ENCODE measurements at regions of chr7 and their contacts with region 1.

Region 1: DNA sequence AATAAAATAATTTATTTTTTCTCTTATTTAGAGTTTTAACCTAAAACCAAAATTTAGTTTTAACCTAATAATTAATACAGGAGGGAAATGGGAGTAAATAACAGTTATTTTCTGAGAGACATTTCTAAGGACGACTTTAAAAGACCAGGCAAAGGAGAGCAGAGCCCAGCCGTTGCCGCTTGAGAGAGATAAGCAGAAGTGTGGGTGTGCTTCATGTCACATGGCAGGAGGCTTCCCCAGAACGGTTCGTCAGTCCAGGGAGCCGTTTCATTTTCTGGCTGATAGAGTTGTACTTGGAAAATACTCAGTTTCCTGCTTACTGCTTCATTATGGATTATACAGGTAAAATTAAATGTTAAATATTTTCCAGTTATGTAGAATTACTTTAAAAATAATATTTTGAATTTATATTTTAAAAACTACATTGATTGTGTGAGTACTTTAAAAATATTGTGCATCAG is 61.4 kb downstream of the ST7 start:
- DNase-seq: no peak
- ATAC-seq: no peak
- H3K4me3 Mint-ChIP-seq: no peak overlapping the region
- H3K27ac Mint-ChIP-seq: no peak overlapping the region
- H3K4me1 Mint-ChIP-seq: peaks cover 50% of the 10 kb centered on the region
- H3K27me3 Mint-ChIP-seq: peaks cover 3% of the 10 kb centered on the region
- CTCF ChIP-seq: no peak

Region 2: GRCh38 chr7:116862234-116862950 is 152.3 kb before region 1 on chr7 and contains the start of gene CAPZA2:
- CTCF ChIA-PET with region 1: no interaction called
- POLR2A ChIA-PET with region 1: interaction called, 10 read pairs
- intact Hi-C with region 1: loop called (anchors 1 kb)
- DNase-seq: peak; percentile 98
- ATAC-seq: peak; percentile 87
- H3K4me3 Mint-ChIP-seq: peak within 1 kb of the TSS; percentile 98
- H3K27ac Mint-ChIP-seq: peak within 1 kb of the TSS; percentile 93
- H3K4me1 Mint-ChIP-seq: peaks cover 39% of the 10 kb centered on the region
- H3K27me3 Mint-ChIP-seq: peaks cover 5% of the 10 kb centered on the region
- CTCF ChIP-seq: no peak
- total RNA-seq, gene CAPZA2: 101 and 110 TPM in 2 replicates

Region 3: GRCh38 chr7:116953727-116954442 is 60.8 kb before region 1 on chr7:
- CTCF ChIA-PET with region 1: no interaction called
- POLR2A ChIA-PET with region 1: interaction called, 16 read pairs
- intact Hi-C with region 1: loop called (anchors 1 kb)
- DNase-seq: peak; percentile 60
- ATAC-seq: peak; percentile 59
- H3K4me3 Mint-ChIP-seq: peak overlapping the region; percentile 93
- H3K27ac Mint-ChIP-seq: peak overlapping the region; percentile 86
- H3K4me1 Mint-ChIP-seq: peaks cover 27% of the 10 kb centered on the region
- H3K27me3 Mint-ChIP-seq: no peaks in the 10 kb centered on the region
- CTCF ChIP-seq: no peak

Region 4: GRCh38 chr7:117001283-117001682 is 13.4 kb before region 1 on chr7:
- CTCF ChIA-PET with region 1: no interaction called
- POLR2A ChIA-PET with region 1: interaction called, 4 read pairs
- intact Hi-C with region 1: loop called (anchors 1 kb)
- DNase-seq: no peak
- ATAC-seq: no peak
- H3K4me3 Mint-ChIP-seq: no peak overlapping the region
- H3K27ac Mint-ChIP-seq: no peak overlapping the region
- H3K4me1 Mint-ChIP-seq: no peaks in the 10 kb centered on the region
- H3K27me3 Mint-ChIP-seq: no peaks in the 10 kb centered on the region
- CTCF ChIP-seq: no peak

Region 5: GRCh38 chr7:118657391-118658005 is 1642.8 kb after region 1 on chr7:
- CTCF ChIA-PET with region 1: no interaction called
- POLR2A ChIA-PET with region 1: no interaction called
- intact Hi-C with region 1: no loop called
- DNase-seq: no peak
- ATAC-seq: no peak
- H3K4me3 Mint-ChIP-seq: no peak overlapping the region
- H3K27ac Mint-ChIP-seq: no peak overlapping the region
- H3K4me1 Mint-ChIP-seq: no peaks in the 10 kb centered on the region
- H3K27me3 Mint-ChIP-seq: no peaks in the 10 kb centered on the region
- CTCF ChIP-seq: no peak

Measured in activated B cell treated with CpG ODN at 0.5 μM for 24 hours (primary cell).